ENCODE measurements at regions of chr13 and their contacts with region 1.

Region 1: DNA sequence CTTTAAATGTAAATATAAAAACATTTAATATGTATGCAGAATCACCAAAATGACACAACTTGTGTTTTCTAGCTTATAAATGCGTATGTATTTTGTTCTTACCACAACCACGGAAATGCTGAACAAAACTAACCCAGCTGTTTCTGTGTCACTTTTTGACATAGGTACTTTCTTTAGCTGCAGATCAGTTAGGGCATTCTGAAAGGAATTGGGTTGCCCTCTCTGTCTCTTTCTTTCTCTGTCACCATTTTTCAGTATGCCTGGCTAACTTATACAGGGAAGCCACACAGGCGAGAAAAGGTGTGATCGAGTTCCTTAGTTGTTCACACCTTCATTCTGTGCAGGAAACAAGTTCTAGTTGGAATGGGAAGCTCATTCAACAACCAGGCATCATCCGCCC is 72.6 kb upstream of the ARGLU1 start:
- DNase-seq: no peak
- H3K4me3 ChIP-seq: no peak overlapping the region
- H3K27ac ChIP-seq: no peak overlapping the region
- H3K4me1 ChIP-seq: no peaks in the 10 kb centered on the region
- H3K27me3 ChIP-seq: peaks cover 7% of the 10 kb centered on the region
- CTCF ChIP-seq: no peak

Region 2: DNA sequence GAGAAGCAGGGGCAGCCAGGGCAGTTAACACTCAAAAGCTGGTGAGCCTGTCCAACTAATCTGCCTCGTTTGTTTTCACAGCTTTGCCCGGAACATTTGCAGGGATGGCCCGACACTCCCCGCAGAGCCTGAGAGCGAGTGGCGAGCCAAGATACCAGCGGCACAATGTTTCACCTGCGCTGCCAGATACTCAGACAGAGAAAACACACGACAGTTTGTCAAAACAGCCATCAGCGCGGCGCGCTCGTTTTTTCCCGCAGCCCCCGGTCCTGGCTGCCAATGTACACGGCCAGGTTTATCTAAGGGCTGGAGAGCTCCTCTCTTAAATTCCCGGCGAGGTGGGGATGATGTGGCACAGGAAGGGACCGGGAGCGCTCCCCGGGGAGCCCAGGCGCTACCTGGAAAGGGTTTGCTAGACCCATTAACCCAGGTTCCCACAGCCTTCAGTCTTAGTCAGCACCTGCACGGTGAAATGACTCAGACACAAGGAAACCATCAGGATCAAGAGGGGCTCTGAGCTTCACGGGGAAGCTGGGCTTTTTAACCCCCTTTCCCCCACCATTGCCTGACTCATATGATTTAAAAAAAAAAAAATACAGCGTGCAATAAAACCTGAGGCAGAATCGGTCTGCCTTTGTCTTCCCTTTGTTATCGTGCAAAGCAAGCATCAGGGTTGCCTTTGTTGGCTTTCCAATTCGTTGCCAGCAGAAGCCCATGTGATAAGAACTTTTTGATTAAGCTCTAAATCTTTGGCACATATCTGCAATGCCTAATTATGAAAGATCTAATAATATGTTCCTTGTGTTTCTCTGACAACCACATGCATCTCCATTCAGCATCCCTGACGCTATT is 291.2 kb before region 1 on chr13:
- CTCF ChIA-PET with region 1: no interaction called
- POLR2A ChIA-PET with region 1: no interaction called
- intact Hi-C with region 1: no loop called
- DNase-seq: no peak
- H3K4me3 ChIP-seq: no peak overlapping the region
- H3K27ac ChIP-seq: no peak overlapping the region
- H3K4me1 ChIP-seq: no peaks in the 10 kb centered on the region
- H3K27me3 ChIP-seq: peaks cover 32% of the 10 kb centered on the region
- CTCF ChIP-seq: no peak

Region 3: GRCh38 chr13:106874323-106874722 is 233.8 kb after region 1 on chr13:
- CTCF ChIA-PET with region 1: no interaction called
- POLR2A ChIA-PET with region 1: interaction called, 10 read pairs
- intact Hi-C with region 1: no loop called
- DNase-seq: no peak
- H3K4me3 ChIP-seq: no peak overlapping the region
- H3K27ac ChIP-seq: no peak overlapping the region
- H3K4me1 ChIP-seq: no peaks in the 10 kb centered on the region
- H3K27me3 ChIP-seq: peaks cover 7% of the 10 kb centered on the region
- CTCF ChIP-seq: no peak

Region 4: GRCh38 chr13:108176685-108177274 is 1536.3 kb after region 1 on chr13:
- CTCF ChIA-PET with region 1: no interaction called
- POLR2A ChIA-PET with region 1: no interaction called
- intact Hi-C with region 1: no loop called
- DNase-seq: peak; percentile 61
- H3K4me3 ChIP-seq: no peak overlapping the region
- H3K27ac ChIP-seq: no peak overlapping the region
- H3K4me1 ChIP-seq: no peaks in the 10 kb centered on the region
- H3K27me3 ChIP-seq: no peaks in the 10 kb centered on the region
- CTCF ChIP-seq: peak; percentile 70